ENCODE measurements at regions of chr16 and their contacts with region 1.

Region 1: DNA sequence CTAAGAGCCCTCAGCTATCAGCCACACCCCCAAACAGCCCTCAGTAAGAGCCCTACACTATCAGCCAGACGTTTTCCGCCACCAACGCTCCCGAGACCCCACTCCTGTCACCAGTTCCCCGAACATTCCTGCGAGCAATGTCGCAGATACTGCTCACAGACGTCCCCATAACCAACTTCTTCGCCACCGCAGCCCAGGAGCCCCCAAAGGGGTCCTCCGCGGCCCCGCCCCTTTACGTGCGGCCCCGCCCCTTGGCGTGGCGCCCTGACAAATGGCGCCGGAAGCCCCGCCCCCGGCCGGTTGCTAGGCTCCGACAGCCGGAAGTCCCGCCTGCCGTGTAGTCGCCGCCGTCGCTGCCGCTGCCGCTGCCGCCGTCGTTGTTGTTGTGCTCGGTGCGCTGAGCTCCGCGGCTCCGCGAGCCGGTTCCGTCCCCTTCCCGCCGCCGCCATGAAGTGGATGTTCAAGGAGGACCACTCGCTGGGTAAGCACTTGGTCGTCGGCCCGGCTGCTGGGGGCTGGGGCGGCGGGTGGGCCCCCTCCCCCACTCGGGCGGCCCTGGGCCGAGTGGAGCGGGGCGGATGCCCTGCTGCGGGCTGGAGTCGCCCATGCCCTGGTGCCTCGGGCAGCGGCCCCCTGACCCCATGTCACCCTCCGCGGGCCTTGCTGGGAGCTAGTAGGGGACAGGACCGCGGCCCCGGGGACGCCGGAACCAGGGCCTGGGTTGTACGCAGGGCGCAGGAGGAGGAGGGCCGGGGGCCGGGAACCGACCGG is at the start of gene GABARAPL2:
- DNase-seq: peak; percentile 63 to 98
- H3K4me3 ChIP-seq: peak within 1 kb of the TSS; percentile 80 to 94 (median 88)
- H3K27ac ChIP-seq: no peak within 1 kb of the TSS
- H3K4me1 ChIP-seq: peaks cover 1 to 8% (median 3%) of the 10 kb centered on the region in 4 experiments; a peak in 5 of 7 replicates
- H3K27me3 ChIP-seq: no peaks in the 10 kb centered on the region
- CTCF ChIP-seq: no peak
- EP300 ChIP-seq: no peak
- POLR2A ChIP-seq: peak in 1 of 2 experiments; percentile 51; a peak in 1 of 3 replicates
- RAD21 ChIP-seq: peak in 1 of 2 experiments; percentile 0; a peak in 1 of 4 replicates
- total RNA-seq, gene GABARAPL2: 67.4 and 71.3 TPM in 2 replicates

Region 2: DNA sequence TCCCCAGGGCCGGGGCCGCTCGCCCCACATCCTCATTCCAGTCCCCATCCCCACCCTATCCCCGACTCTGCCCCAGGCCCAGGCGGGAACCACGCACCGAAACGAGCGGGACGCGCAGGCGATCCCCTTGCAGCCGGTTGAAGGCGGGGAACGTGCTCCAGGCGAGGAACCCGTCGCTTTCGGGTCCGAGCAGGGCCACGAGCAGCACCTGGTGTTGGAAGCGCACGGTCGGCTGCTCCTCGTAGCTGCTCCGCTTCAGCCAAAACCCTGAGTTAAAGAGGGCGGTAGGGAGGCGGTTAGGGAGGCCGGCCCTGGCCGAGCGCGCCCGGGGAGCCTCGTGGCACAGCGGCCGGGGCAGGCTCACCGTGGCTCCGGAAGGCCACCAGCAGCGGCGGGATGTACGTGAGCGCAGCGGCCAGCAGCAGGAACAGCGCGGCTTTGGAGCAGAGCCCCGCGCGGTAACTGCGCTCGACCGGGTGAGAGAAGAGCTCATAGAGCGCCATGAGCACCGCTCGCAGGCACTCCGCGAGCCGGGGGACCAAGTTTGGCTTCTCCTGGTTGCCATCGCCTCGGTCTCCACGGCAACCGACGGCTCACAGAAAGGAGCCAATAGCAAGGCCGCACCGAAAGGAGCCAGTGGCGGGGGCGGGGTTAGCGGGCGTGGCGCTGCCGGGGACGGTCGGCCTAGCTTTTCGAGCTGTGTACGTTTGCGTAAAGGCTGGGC is 10.4 kb before region 1 on chr16 and contains the start of gene TMEM231:
- CTCF ChIA-PET with region 1: interaction called, 18 read pairs
- POLR2A ChIA-PET with region 1: interaction called, 21 read pairs
- DNase-seq: peak; percentile 67 to 96
- H3K4me3 ChIP-seq: peak within 1 kb of the TSS; percentile 57 to 96 (median 84)
- H3K27ac ChIP-seq: no peak within 1 kb of the TSS
- H3K4me1 ChIP-seq: peaks cover 0 to 3% (median 1%) of the 10 kb centered on the region in 4 experiments; a peak in 3 of 7 replicates
- H3K27me3 ChIP-seq: no peaks in the 10 kb centered on the region; a peak in 1 of 7 replicates
- CTCF ChIP-seq: no peak
- EP300 ChIP-seq: no peak
- POLR2A ChIP-seq: 0 out of 3 replicates have a peak, but pooled peaks of 1 of the 2 experiments have one; percentile 34
- RAD21 ChIP-seq: no peak
- total RNA-seq, gene TMEM231: 8.0 and 8.3 TPM in 2 replicates

Region 3: DNA sequence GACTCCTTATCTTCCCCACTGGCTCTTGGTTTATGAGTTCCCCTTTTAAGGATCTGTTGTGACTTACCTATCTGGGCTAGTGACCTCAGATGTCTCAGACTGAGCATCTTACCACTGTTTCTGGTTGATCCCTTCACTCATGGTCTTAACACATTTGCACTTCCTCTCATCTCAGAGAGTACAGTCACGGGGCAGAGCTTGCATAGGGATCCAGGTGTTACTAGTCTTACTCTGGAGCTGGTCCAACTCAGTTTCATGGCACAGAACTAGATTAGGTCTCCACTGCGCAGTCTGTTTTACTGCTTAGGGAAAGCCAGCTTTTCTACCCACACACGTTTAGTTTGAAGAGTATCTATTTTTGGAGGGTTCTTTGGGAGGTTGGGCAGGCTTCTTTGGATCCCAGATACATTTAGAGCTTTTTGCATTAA is 10.2 kb after region 1 on chr16:
- CTCF ChIA-PET with region 1: interaction called, 6 read pairs
- POLR2A ChIA-PET with region 1: interaction called, 13 read pairs
- DNase-seq: no peak
- H3K4me3 ChIP-seq: no peak overlapping the region
- H3K27ac ChIP-seq: no peak overlapping the region; the same call in 1 of the 2 replicates
- H3K4me1 ChIP-seq: peaks cover 0 to 12% (median 2%) of the 10 kb centered on the region in 4 experiments; a peak in 3 of 7 replicates
- H3K27me3 ChIP-seq: no peaks in the 10 kb centered on the region
- CTCF ChIP-seq: no peak
- EP300 ChIP-seq: no peak
- POLR2A ChIP-seq: no peak
- RAD21 ChIP-seq: no peak

Measured in H1 (cell line).